ENCODE measurements at regions of chr20 and their contacts with region 1.

Region 1: GRCh38 chr20:15643714-15644113 is 929.5 kb downstream of the KIF16B start:
- DNase-seq: no peak
- H3K4me3 ChIP-seq: no peak overlapping the region
- H3K27ac ChIP-seq: no peak overlapping the region
- H3K4me1 ChIP-seq: no peaks in the 10 kb centered on the region
- H3K27me3 ChIP-seq: no peaks in the 10 kb centered on the region
- CTCF ChIP-seq: peak; percentile 49 to 63

Region 2: DNA sequence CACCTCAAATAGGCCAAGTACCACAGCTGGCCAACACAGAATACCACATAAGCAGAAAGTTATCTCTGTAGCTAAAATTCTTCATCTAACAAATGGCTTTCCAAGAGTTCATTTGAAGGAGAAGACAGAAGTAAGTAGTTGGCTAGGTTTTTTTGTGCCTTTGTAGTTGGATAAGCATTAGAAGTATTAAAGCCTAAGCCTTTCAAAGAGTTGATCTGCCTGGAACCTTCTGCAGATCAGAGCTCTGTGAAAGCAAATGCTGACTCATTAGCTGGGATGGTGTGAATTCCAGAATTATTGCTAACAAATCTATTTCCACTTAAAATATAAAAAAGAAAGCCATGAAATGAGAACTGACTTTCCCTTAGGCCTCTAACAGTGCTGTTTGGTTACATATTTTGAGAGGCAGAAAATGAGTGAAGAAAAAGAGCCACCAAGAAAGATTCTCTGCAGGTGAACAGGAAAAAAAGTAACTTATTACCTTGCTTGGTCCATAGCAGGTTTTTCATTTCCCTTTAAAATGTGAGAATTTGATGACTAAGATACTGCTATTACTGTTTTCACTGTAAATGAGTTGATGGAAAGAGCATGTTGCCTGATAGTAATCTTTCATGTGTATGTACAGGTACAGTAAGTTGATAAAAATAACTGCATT is 543.1 kb before region 1 on chr20:
- CTCF ChIA-PET with region 1: no interaction called
- dilution Hi-C with region 1: no loop called
- in situ Hi-C with region 1: no loop called
- intact Hi-C with region 1: no loop called
- DNase-seq: peak; percentile 33
- H3K4me3 ChIP-seq: no peak overlapping the region
- H3K27ac ChIP-seq: no peak overlapping the region
- H3K4me1 ChIP-seq: peaks cover 3% of the 10 kb centered on the region
- H3K27me3 ChIP-seq: no peaks in the 10 kb centered on the region
- CTCF ChIP-seq: no peak

Region 3: DNA sequence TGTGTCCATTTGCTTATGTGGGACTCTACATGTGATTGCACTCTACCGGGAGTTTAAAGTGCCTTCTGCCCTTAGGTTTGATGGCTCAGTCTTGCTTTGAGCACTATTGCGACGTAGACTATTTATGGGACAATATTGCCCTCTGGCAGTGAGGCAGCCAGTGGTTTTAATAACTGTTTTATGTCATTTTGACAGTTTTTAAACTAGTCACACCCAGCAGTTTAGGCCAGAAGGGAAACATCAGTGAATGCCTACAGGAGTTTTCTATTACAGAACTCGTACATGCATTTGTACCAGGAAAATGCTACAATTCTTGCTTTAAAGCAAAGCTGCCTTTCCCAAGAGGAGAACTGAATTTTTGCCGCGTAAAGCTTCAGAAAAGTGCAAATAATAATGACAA is 115.9 kb after region 1 on chr20:
- CTCF ChIA-PET with region 1: no interaction called
- dilution Hi-C with region 1: no loop called
- in situ Hi-C with region 1: no loop called
- intact Hi-C with region 1: loop called (anchors 10 kb)
- DNase-seq: no peak
- H3K4me3 ChIP-seq: no peak overlapping the region
- H3K27ac ChIP-seq: no peak overlapping the region
- H3K4me1 ChIP-seq: no peaks in the 10 kb centered on the region
- H3K27me3 ChIP-seq: no peaks in the 10 kb centered on the region
- CTCF ChIP-seq: peak in 1 of 2 donors; percentile 18

Region 4: GRCh38 chr20:15867901-15868300 is 224.2 kb after region 1 on chr20:
- CTCF ChIA-PET with region 1: no interaction called
- dilution Hi-C with region 1: no loop called
- in situ Hi-C with region 1: no loop called
- intact Hi-C with region 1: loop called (anchors 2 kb)
- DNase-seq: no peak
- H3K4me3 ChIP-seq: no peak overlapping the region
- H3K27ac ChIP-seq: no peak overlapping the region
- H3K4me1 ChIP-seq: no peaks in the 10 kb centered on the region
- H3K27me3 ChIP-seq: no peaks in the 10 kb centered on the region
- CTCF ChIP-seq: peak; percentile 25 to 57

Region 5: GRCh38 chr20:16028923-16029322 is 385.2 kb after region 1 on chr20:
- CTCF ChIA-PET with region 1: no interaction called
- dilution Hi-C with region 1: no loop called
- in situ Hi-C with region 1: no loop called
- intact Hi-C with region 1: no loop called
- DNase-seq: no peak
- H3K4me3 ChIP-seq: no peak overlapping the region
- H3K27ac ChIP-seq: no peak overlapping the region
- H3K4me1 ChIP-seq: no peaks in the 10 kb centered on the region
- H3K27me3 ChIP-seq: no peaks in the 10 kb centered on the region
- CTCF ChIP-seq: no peak

Region 6: DNA sequence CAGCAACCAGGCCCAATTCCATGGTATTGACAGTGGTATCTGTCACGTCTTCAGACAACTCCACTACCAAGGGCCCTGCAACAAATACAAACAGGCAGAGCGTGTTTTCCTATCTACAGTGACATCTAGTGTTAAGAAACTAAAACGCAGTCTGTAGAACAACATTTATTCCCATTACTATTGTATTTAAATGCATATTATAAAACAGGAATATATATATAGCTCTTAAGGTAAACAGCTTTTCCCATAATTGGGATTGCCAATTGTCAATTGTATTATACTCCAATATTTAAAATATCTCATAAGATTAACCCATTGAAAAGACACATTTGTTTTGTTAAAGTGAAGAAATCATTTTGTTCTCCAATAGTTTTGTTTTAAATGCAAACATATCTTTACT is 832.3 kb after region 1 on chr20:
- CTCF ChIA-PET with region 1: no interaction called
- dilution Hi-C with region 1: no loop called
- in situ Hi-C with region 1: no loop called
- intact Hi-C with region 1: loop called (anchors 5 kb)
- DNase-seq: peak; percentile 23
- H3K4me3 ChIP-seq: no peak overlapping the region
- H3K27ac ChIP-seq: no peak overlapping the region
- H3K4me1 ChIP-seq: no peaks in the 10 kb centered on the region
- H3K27me3 ChIP-seq: no peaks in the 10 kb centered on the region
- CTCF ChIP-seq: peak; percentile 65

Measured in mammary epithelial cell (primary cell).